CD8-positive, alpha-beta T cell (primary cell): ENCODE measurements at regions of chr1 and their contacts with region 1.

Region 1: DNA sequence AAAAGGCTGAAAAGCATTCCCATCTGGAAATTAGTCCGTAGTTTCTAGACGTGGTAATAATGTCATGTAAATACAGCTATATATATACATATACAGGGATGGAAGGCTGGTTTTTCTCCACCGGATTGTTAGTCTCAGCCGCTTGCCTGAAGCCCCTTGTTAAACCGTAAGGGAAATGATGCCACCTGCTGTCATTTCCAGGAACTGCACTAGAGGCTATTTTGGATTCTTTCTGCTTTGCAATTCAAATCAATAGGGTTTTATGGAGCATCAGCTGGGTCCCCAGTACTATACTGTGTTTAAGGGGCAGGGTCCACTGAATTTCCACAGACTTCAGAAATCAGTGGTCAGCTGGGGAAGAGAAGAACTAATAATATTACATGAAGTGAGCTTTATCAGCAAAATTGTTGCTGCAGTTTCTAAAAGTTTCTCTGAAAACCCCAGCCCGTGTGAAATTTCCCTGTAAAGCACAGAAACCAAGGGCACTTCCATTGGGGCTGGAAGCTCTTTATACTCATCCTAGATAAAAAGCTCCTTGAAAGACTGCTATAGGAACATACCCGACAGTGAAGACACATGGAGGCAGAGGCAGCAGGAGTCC is 33.8 kb upstream of the MPZL1 start:
- DNase-seq: peak; percentile 62 to 85 (median 82)
- ATAC-seq: peak; percentile 95
- H3K4me3 ChIP-seq: no peak overlapping the region
- H3K4me3 Mint-ChIP-seq: no peak overlapping the region
- H3K27ac ChIP-seq: no peak overlapping the region
- H3K27ac Mint-ChIP-seq: peak overlapping the region; percentile 67
- H3K4me1 ChIP-seq: peaks cover 5% of the 10 kb centered on the region
- H3K4me1 Mint-ChIP-seq: peaks cover 18% of the 10 kb centered on the region
- H3K27me3 ChIP-seq: no peaks in the 10 kb centered on the region
- H3K27me3 Mint-ChIP-seq: no peaks in the 10 kb centered on the region
- CTCF ChIP-seq: peak; percentile 99

Region 2: GRCh38 chr1:166479052-166479631 is 1208.9 kb before region 1 on chr1:
- CTCF ChIA-PET with region 1: no interaction called
- POLR2A ChIA-PET with region 1: no interaction called
- intact Hi-C with region 1: no loop called
- DNase-seq: peak in 8 of 9 experiments; percentile 4 to 62 (median 38)
- ATAC-seq: peak; percentile 34
- H3K4me3 ChIP-seq: no peak overlapping the region
- H3K4me3 Mint-ChIP-seq: no peak overlapping the region
- H3K27ac ChIP-seq: no peak overlapping the region
- H3K27ac Mint-ChIP-seq: no peak overlapping the region
- H3K4me1 ChIP-seq: no peaks in the 10 kb centered on the region
- H3K4me1 Mint-ChIP-seq: no peaks in the 10 kb centered on the region
- H3K27me3 ChIP-seq: no peaks in the 10 kb centered on the region
- H3K27me3 Mint-ChIP-seq: no peaks in the 10 kb centered on the region
- CTCF ChIP-seq: peak; percentile 86

Region 3: DNA sequence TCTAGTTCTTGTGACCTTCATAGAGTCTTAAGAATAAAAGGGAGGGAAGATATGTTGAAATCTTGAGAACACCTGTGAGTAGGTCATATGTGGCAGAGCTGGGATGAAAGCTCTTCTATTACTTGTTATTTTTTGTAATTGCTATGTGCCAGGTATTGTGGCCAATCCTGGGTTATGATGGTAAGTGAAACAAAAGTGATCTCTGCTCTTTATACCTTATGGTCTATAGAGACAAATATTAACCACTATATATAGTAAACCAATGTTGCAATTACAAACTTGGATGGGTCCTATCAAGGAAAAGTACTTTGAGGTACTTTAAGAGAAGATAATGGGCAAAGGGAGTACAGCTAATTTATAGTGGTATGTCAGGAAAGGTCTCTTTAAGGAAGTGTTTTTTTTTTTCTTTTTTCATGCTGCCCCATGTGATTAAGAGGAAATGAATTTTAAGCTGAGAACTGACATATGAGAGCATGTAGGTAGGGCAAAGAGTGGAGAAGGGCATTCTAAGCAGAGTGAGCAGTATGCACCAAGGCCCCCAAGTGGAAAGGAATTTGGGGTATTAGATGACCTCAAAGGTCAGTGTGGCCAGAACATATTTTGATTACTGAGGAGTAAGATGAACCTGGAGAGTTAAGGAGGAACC is 424.1 kb before region 1 on chr1:
- CTCF ChIA-PET with region 1: no interaction called
- POLR2A ChIA-PET with region 1: no interaction called
- intact Hi-C with region 1: loop called in 1 of 2 experiments (anchors 10 kb)
- DNase-seq: peak in 2 of 9 experiments; percentile 6 to 35
- ATAC-seq: peak; percentile 35
- H3K4me3 ChIP-seq: no peak overlapping the region
- H3K4me3 Mint-ChIP-seq: no peak overlapping the region
- H3K27ac ChIP-seq: peak overlapping the region in 1 of 2 experiments; percentile 18
- H3K27ac Mint-ChIP-seq: no peak overlapping the region
- H3K4me1 ChIP-seq: peaks cover 48% of the 10 kb centered on the region
- H3K4me1 Mint-ChIP-seq: peaks cover 34% of the 10 kb centered on the region
- H3K27me3 ChIP-seq: no peaks in the 10 kb centered on the region
- H3K27me3 Mint-ChIP-seq: no peaks in the 10 kb centered on the region
- CTCF ChIP-seq: no peak

Region 4: DNA sequence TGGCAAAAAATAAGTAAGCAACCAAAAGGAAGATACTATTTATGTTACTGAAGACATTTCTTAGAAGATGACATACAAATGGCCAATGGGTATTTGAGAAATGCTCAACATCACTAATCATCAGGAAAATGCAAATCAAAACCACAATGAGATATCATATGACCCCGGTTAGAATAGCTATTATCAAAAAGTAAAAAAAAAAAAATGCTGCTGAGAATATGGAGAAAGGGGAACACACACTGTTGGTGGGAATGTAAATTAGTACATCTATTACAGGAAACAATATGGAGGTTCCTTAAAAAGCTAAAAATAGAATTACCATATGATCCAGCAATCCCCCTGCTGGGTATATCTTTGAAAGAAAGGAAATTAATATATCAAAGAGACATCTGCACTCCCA is 100.1 kb before region 1 on chr1:
- CTCF ChIA-PET with region 1: interaction called, 31 read pairs
- POLR2A ChIA-PET with region 1: interaction called, 3 read pairs
- intact Hi-C with region 1: no loop called
- DNase-seq: no peak
- ATAC-seq: no peak
- H3K4me3 ChIP-seq: no peak overlapping the region
- H3K4me3 Mint-ChIP-seq: no peak overlapping the region
- H3K27ac ChIP-seq: no peak overlapping the region
- H3K27ac Mint-ChIP-seq: no peak overlapping the region
- H3K4me1 ChIP-seq: no peaks in the 10 kb centered on the region
- H3K4me1 Mint-ChIP-seq: no peaks in the 10 kb centered on the region
- H3K27me3 ChIP-seq: no peaks in the 10 kb centered on the region
- H3K27me3 Mint-ChIP-seq: peaks cover 4% of the 10 kb centered on the region
- CTCF ChIP-seq: no peak

Region 5: GRCh38 chr1:167605576-167605975 is 82.4 kb before region 1 on chr1:
- CTCF ChIA-PET with region 1: interaction called, 186 read pairs
- POLR2A ChIA-PET with region 1: interaction called, 22 read pairs
- intact Hi-C with region 1: loop called (anchors 1 kb)
- DNase-seq: no peak
- ATAC-seq: no peak
- H3K4me3 ChIP-seq: no peak overlapping the region
- H3K4me3 Mint-ChIP-seq: no peak overlapping the region
- H3K27ac ChIP-seq: no peak overlapping the region
- H3K27ac Mint-ChIP-seq: no peak overlapping the region
- H3K4me1 ChIP-seq: peaks cover 29% of the 10 kb centered on the region
- H3K4me1 Mint-ChIP-seq: peaks cover 31% of the 10 kb centered on the region
- H3K27me3 ChIP-seq: no peaks in the 10 kb centered on the region
- H3K27me3 Mint-ChIP-seq: no peaks in the 10 kb centered on the region
- CTCF ChIP-seq: no peak

Region 6: GRCh38 chr1:167635156-167635648 is 52.8 kb before region 1 on chr1:
- CTCF ChIA-PET with region 1: interaction called, 34 read pairs
- POLR2A ChIA-PET with region 1: interaction called, 4 read pairs
- intact Hi-C with region 1: loop called (anchors 1 kb)
- DNase-seq: peak in 1 of 9 experiments; percentile 46
- ATAC-seq: no peak
- H3K4me3 ChIP-seq: no peak overlapping the region
- H3K4me3 Mint-ChIP-seq: peak overlapping the region; percentile 8
- H3K27ac ChIP-seq: peak overlapping the region in 1 of 2 experiments; percentile 5
- H3K27ac Mint-ChIP-seq: peak overlapping the region; percentile 97
- H3K4me1 ChIP-seq: peaks cover 76% of the 10 kb centered on the region
- H3K4me1 Mint-ChIP-seq: peaks cover 88% of the 10 kb centered on the region
- H3K27me3 ChIP-seq: no peaks in the 10 kb centered on the region
- H3K27me3 Mint-ChIP-seq: no peaks in the 10 kb centered on the region
- CTCF ChIP-seq: no peak

Region 7: GRCh38 chr1:167669209-167670124 is 18.6 kb before region 1 on chr1:
- CTCF ChIA-PET with region 1: interaction called, 13 read pairs
- POLR2A ChIA-PET with region 1: no interaction called
- intact Hi-C with region 1: no loop called
- DNase-seq: no peak
- ATAC-seq: no peak
- H3K4me3 ChIP-seq: no peak overlapping the region
- H3K4me3 Mint-ChIP-seq: no peak overlapping the region
- H3K27ac ChIP-seq: no peak overlapping the region
- H3K27ac Mint-ChIP-seq: peak overlapping the region; percentile 72
- H3K4me1 ChIP-seq: peaks cover 51% of the 10 kb centered on the region
- H3K4me1 Mint-ChIP-seq: peaks cover 90% of the 10 kb centered on the region
- H3K27me3 ChIP-seq: no peaks in the 10 kb centered on the region
- H3K27me3 Mint-ChIP-seq: no peaks in the 10 kb centered on the region
- CTCF ChIP-seq: no peak

Region 8: GRCh38 chr1:167819849-167820683 is 132.0 kb after region 1 on chr1:
- CTCF ChIA-PET with region 1: no interaction called
- POLR2A ChIA-PET with region 1: no interaction called
- intact Hi-C with region 1: no loop called
- DNase-seq: peak in 2 of 9 experiments; percentile 25 to 29
- ATAC-seq: no peak
- H3K4me3 ChIP-seq: peak overlapping the region in 1 of 2 experiments; percentile 18
- H3K4me3 Mint-ChIP-seq: peak overlapping the region; percentile 66
- H3K27ac ChIP-seq: no peak overlapping the region
- H3K27ac Mint-ChIP-seq: no peak overlapping the region
- H3K4me1 ChIP-seq: no peaks in the 10 kb centered on the region
- H3K4me1 Mint-ChIP-seq: peaks cover 14% of the 10 kb centered on the region
- H3K27me3 ChIP-seq: no peaks in the 10 kb centered on the region
- H3K27me3 Mint-ChIP-seq: peaks cover 10% of the 10 kb centered on the region
- CTCF ChIP-seq: no peak